ENCODE measurements at regions of chr1 and their contacts with region 1.

Region 1: DNA sequence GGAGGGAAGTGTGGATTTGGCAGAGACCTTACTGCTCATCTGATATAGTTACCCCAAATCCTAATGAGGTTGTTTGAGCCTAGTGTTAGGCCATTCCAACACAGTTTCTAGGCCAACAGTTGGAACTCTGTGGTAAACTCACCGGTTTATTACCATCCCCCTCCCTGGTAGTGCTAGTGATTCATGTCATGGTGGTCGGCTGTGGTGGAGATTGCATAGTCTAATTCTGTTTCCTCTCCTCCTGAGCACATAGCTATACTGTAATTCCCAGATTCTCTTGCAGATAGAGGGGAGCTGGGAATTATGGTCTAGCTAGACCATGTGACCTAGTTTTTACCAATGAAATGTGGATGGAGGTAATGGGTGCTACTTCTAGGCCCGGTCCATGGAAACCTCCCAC is 123.7 kb upstream of the KIF26B start:
- DNase-seq: no peak
- ATAC-seq: no peak
- H3K4me3 ChIP-seq: no peak overlapping the region
- H3K27ac ChIP-seq: no peak overlapping the region
- H3K4me1 ChIP-seq: no peaks in the 10 kb centered on the region
- H3K27me3 ChIP-seq: no peaks in the 10 kb centered on the region
- CTCF ChIP-seq: no peak

Region 2: GRCh38 chr1:244989813-244990212 is 41.2 kb before region 1 on chr1:
- intact Hi-C with region 1: loop called in 2 of 10 experiments (anchors 5 to 10 kb)
- DNase-seq: no peak
- ATAC-seq: no peak
- H3K4me3 ChIP-seq: no peak overlapping the region
- H3K27ac ChIP-seq: no peak overlapping the region
- H3K4me1 ChIP-seq: peaks cover 0 to 6% (median 0%) of the 10 kb centered on the region in 9 donors
- H3K27me3 ChIP-seq: no peaks in the 10 kb centered on the region
- CTCF ChIP-seq: no peak